Activated CD4-positive, alpha-beta T cell treated with anti-CD3 and anti-CD28 coated beads, Interleukin-2, amount 10 ng/mL, durations not matched to agents 24 days and 14 days (primary cell): ENCODE measurements at regions of chr5 and their contacts with region 1.

Region 1: DNA sequence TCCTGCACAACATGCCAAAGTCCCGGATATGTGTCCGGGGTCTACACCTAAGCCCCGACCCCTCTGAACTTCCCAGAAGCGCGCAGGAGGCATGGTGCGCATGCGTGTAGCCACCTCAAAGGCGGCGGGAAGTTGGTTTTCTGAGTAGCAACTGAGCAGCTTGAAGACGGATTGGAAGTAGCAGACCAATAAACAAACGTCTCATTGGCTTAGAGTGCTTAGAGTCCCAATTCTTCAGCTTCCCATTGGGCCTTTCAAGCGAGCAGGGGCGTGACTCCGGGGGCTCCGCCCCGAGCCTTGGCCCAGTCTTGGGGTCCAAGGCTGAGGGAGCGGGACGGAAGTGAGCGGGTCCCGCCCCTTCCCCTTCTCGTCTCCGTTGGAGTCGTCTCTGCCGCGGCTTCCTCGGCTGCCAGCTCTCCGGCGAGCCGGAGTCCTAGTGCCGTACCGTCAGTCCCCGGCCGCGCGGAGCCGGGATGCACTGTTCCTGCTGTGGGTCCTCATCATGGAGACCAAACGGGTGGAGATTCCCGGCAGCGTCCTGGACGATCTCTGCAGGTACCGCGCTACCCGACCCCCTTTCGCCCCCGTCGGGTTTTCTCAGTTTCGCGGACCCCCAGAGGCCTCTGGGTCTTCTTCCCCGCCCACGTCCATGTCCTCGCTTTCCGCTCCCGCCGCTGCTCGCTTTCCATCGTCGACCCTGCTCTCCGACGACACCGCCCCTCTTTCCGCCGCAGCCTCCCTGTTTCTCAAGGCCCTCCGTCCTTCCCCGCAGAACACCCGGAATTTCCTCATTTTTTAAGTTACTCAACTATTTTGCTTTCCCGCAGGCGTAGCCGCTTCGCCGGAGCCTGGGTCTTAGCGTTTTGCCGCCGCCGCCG is at the start of gene DCP2:
- DNase-seq: peak; percentile 99
- H3K4me3 Mint-ChIP-seq: peak within 1 kb of the TSS; percentile 93
- H3K27ac Mint-ChIP-seq: peak within 1 kb of the TSS; percentile 94
- H3K4me1 Mint-ChIP-seq: peaks cover 35% of the 10 kb centered on the region
- H3K27me3 Mint-ChIP-seq: no peaks in the 10 kb centered on the region
- total RNA-seq, gene DCP2: 73.6 and 78.8 TPM in 2 replicates

Region 2: GRCh38 chr5:112772124-112772523 is 204.5 kb before region 1 on chr5:
- intact Hi-C with region 1: no loop called
- DNase-seq: no peak
- H3K4me3 Mint-ChIP-seq: no peak overlapping the region
- H3K27ac Mint-ChIP-seq: no peak overlapping the region
- H3K4me1 Mint-ChIP-seq: no peaks in the 10 kb centered on the region
- H3K27me3 Mint-ChIP-seq: no peaks in the 10 kb centered on the region

Region 3: DNA sequence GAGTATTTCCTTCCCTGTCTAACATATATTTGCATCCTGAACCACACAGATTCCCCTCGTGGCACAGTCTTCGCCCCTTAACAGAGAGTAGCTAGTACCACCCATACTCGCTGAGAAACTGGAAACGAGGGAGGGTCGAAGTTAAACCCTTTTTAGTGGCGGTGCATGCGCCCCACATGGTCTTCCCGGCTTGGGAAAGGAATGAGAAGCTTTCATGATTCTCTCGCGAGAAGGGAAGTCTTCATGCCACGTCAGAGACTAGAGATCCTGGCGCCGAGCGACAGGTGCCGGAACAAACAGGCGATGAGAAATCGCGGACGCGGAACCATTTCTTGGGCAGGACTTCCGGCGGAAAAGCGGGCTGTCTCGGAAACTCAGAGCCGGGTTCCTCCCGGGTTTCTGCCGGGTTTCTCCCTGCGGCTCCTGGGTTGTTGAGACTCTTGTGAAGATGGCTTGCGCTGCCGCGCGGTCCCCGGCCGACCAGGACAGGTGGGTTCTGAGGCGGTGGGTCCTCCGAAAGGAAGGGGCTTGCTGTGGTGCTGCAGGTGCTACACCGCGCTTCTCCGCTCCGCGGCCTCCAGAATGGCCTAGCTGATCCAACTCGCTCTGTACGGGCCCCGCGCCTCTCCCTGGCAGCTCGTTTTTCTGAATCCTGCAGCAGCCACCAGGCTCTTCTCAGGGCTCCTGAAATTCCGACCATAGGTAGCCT is 115.6 kb before region 1 on chr5 and contains the start of gene SRP19:
- intact Hi-C with region 1: loop called (anchors 1 kb)
- DNase-seq: peak; percentile 98
- H3K4me3 Mint-ChIP-seq: peak within 1 kb of the TSS; percentile 95
- H3K27ac Mint-ChIP-seq: peak within 1 kb of the TSS; percentile 94
- H3K4me1 Mint-ChIP-seq: peaks cover 18% of the 10 kb centered on the region
- H3K27me3 Mint-ChIP-seq: peaks cover 17% of the 10 kb centered on the region
- total RNA-seq, gene SRP19: 67.4 and 74.3 TPM in 2 replicates

Region 4: DNA sequence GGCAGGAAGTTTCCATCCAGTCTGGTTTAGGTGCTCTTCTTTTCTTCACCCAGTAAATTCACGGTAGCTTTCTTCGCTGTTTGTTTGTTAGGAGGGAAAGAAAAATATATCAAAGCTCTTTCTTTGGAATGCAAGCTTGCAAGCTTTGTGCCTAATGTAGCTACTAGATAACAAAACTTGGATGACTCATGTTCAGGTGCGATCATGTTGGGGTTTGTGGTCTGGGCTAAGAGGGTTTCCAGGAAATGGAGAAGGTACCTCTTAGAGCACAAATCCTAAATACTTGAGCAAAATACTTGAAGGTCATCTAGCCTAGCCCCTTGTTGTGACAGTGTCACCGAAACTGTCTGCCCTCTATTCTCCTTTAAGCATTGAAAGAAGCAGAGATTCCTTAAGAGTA is 97.9 kb before region 1 on chr5:
- intact Hi-C with region 1: loop called (anchors 5 kb)
- DNase-seq: peak; percentile 88
- H3K4me3 Mint-ChIP-seq: peak overlapping the region; percentile 57
- H3K27ac Mint-ChIP-seq: peak overlapping the region; percentile 68
- H3K4me1 Mint-ChIP-seq: peaks cover 33% of the 10 kb centered on the region
- H3K27me3 Mint-ChIP-seq: no peaks in the 10 kb centered on the region

Region 5: GRCh38 chr5:113022661-113023060 is 46.0 kb after region 1 on chr5:
- intact Hi-C with region 1: loop called (anchors 2 kb)
- DNase-seq: peak; percentile 82
- H3K4me3 Mint-ChIP-seq: peak overlapping the region; percentile 59
- H3K27ac Mint-ChIP-seq: peak overlapping the region; percentile 75
- H3K4me1 Mint-ChIP-seq: peaks cover 48% of the 10 kb centered on the region
- H3K27me3 Mint-ChIP-seq: no peaks in the 10 kb centered on the region

Region 6: DNA sequence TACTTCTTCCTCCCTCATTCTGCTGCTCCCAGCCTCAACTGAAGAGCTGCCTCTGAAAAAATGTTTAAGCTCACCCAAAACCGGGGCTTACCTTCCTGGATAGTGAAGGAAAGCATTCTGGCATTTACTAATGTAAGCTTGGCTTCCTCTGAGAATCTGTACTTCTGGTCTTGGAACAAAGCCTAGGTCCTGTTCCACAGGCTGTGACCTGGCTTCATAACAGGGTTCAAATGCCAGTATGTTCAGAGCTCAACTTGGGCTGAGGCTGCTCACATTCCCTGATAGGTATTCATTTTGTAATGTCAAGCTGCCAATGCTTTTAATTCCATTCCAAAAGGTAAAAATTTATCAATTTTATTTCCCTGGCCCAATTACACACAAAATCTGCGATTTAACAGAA is 973.5 kb after region 1 on chr5:
- intact Hi-C with region 1: no loop called
- DNase-seq: no peak
- H3K4me3 Mint-ChIP-seq: no peak overlapping the region
- H3K27ac Mint-ChIP-seq: no peak overlapping the region
- H3K4me1 Mint-ChIP-seq: no peaks in the 10 kb centered on the region
- H3K27me3 Mint-ChIP-seq: no peaks in the 10 kb centered on the region